ENCODE measurements at regions of chr6 and their contacts with region 1.

Region 1: DNA sequence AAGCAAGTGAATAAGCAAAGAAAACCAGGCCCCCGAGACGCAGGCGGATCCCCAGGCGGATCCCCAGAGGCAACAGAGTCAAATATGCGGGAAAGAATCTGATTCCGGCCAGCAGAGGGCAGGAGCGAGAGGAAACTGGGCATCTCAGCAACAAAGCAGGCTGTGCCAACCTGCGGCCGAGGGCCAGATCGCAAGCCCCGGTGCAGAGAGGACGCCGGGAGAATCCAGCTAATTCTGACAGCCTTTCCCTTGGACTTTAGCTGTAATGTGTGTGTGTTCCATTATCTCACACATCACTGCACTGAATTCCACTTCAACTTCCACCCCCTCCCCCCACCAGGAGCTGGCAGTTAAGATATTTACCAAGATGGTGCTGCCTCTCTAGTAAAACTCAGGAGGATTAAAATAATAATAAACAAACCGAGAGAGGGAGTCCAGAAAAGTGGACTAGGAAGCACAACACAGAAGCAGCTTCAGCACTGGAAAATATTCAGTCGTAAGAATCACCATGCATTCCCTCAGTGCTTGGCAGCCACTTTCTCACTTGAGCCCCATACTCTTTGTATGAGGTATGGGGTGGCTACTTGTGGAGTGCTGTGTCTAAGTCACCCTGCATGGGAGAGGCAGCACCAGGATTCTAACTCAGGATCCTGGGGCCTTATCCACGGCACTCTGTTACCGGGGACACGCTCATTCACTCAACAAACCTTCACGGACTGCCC is 66.2 kb upstream of the SNX9 start:
- DNase-seq: peak; percentile 88
- H3K4me3 Mint-ChIP-seq: no peak overlapping the region
- H3K27ac Mint-ChIP-seq: no peak overlapping the region
- H3K4me1 Mint-ChIP-seq: peaks cover 74% of the 10 kb centered on the region
- H3K27me3 Mint-ChIP-seq: peaks cover 82% of the 10 kb centered on the region

Region 2: DNA sequence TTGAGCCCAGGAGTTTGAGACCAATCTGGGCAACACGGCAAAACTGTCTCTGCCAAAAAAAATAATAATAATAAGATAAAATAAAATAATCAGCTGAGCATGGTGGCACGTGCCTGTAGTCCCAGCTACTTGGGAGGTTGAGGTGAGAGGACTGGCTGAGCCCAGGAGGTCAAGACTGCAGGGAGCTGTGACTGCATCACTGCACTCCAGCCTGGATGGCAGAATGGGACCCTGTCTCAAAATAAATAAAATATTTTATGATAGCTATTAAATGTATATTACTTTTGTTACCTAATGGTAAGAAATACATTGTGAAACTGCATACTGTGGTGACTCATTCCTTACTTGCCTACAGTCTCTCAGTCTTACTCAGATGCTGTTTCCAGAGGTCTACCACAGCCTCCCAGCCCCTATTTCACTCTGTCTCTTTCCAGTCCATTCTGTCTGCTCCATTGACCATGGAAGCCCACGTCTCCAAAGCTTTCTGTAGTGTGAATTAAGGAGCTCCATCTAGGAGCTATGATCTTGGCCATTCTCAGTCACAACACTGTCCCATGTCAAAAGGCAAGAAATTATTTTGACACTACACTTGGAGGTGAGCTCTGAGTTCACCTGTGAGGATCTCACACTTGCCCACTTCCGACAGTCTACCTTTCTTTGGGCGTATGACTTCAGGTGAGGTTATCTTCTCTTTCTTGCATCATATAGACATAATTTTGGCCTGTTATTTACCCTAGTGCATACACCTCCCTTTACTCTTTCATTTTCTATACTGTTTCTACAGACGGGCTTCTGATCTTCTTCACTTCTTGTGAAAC is 43.8 kb after region 1 on chr6:
- CTCF ChIA-PET with region 1: interaction called, 13 read pairs
- DNase-seq: peak; percentile 45
- H3K4me3 Mint-ChIP-seq: no peak overlapping the region
- H3K27ac Mint-ChIP-seq: peak overlapping the region; percentile 77
- H3K4me1 Mint-ChIP-seq: peaks cover 20% of the 10 kb centered on the region
- H3K27me3 Mint-ChIP-seq: peaks cover 35% of the 10 kb centered on the region

Region 3: DNA sequence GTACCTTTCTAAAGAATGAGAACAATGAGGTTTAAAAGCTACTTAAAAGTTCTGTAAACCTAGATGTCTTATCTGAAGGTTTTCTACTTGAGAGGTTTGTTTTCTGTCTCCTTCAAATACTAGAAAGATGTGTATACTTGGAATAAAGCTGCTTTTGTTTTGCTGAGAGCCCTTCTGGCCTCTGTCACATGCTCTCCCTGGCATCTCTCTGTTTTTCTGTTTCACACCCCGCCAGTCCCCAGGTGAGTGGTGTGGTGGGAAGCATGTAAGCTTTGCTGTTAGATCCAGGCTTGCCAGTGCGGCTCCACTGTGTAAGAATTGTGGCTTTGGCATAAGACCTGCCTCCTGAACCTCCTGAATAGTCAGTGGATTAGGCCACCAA is 123.0 kb after region 1 on chr6:
- CTCF ChIA-PET with region 1: interaction called, 113 read pairs
- DNase-seq: no peak
- H3K4me3 Mint-ChIP-seq: no peak overlapping the region
- H3K27ac Mint-ChIP-seq: no peak overlapping the region
- H3K4me1 Mint-ChIP-seq: peaks cover 66% of the 10 kb centered on the region
- H3K27me3 Mint-ChIP-seq: no peaks in the 10 kb centered on the region

Region 4: DNA sequence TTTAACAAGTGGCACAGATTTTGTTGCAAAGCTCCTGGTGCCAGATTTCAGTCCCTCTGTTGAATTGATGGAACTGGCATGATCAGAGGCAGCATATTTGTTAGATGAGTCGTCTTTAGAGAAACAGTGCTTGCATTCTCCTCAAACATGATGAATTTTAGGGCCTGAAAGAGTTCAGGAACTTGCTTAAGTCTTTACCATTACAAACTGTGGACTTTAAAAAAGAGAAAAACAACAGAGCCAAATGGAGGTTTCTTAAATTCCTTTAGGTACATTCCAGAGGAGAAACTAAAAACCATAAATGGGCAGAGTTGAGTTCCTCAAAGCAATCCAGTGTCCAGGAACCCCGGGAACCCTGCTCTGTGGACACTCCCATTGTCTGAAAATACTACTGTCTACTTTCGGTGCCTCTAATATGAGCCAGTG is 413.8 kb after region 1 on chr6:
- CTCF ChIA-PET with region 1: no interaction called
- DNase-seq: no peak
- H3K4me3 Mint-ChIP-seq: no peak overlapping the region
- H3K27ac Mint-ChIP-seq: no peak overlapping the region
- H3K4me1 Mint-ChIP-seq: peaks cover 18% of the 10 kb centered on the region
- H3K27me3 Mint-ChIP-seq: no peaks in the 10 kb centered on the region

Measured in activated naive CD4-positive, alpha-beta T cell treated with anti-CD3 and anti-CD28 coated beads, Interleukin-2, amount 10 ng/mL, durations not matched to agents 7 days and 5 days (primary cell).